ENCODE measurements at regions of chr17 and their contacts with region 1.

Region 1: GRCh38 chr17:42609182-42609813 is at the starts of genes RETREG3 and TUBG1:
- DNase-seq: peak; percentile 99
- H3K4me3 Mint-ChIP-seq: peak within 1 kb of the TSS; percentile 99
- H3K27ac Mint-ChIP-seq: peak within 1 kb of the TSS; percentile 91
- H3K4me1 Mint-ChIP-seq: peaks cover 13% of the 10 kb centered on the region
- H3K27me3 Mint-ChIP-seq: no peaks in the 10 kb centered on the region
- CTCF ChIP-seq: peak; percentile 34
- total RNA-seq, gene RETREG3: 45.2 and 46.0 TPM in 2 replicates
- total RNA-seq, gene TUBG1: 57.8 and 60.2 TPM in 2 replicates

Region 2: GRCh38 chr17:41602524-41602923 is 1006.8 kb before region 1 on chr17:
- CTCF ChIA-PET with region 1: no interaction called
- POLR2A ChIA-PET with region 1: no interaction called
- intact Hi-C with region 1: no loop called
- DNase-seq: no peak
- H3K4me3 Mint-ChIP-seq: no peak overlapping the region
- H3K27ac Mint-ChIP-seq: no peak overlapping the region
- H3K4me1 Mint-ChIP-seq: no peaks in the 10 kb centered on the region
- H3K27me3 Mint-ChIP-seq: no peaks in the 10 kb centered on the region
- CTCF ChIP-seq: no peak

Region 3: GRCh38 chr17:42586514-42587230 is 22.6 kb before region 1 on chr17:
- CTCF ChIA-PET with region 1: interaction called, 4 read pairs
- POLR2A ChIA-PET with region 1: interaction called, 83 read pairs
- intact Hi-C with region 1: no loop called
- DNase-seq: peak; percentile 52
- H3K4me3 Mint-ChIP-seq: peak overlapping the region; percentile 21
- H3K27ac Mint-ChIP-seq: peak overlapping the region; percentile 25
- H3K4me1 Mint-ChIP-seq: peaks cover 21% of the 10 kb centered on the region
- H3K27me3 Mint-ChIP-seq: no peaks in the 10 kb centered on the region
- CTCF ChIP-seq: no peak

Region 4: GRCh38 chr17:42598905-42599304 is 10.4 kb before region 1 on chr17:
- CTCF ChIA-PET with region 1: interaction called, 4 read pairs
- POLR2A ChIA-PET with region 1: interaction called, 28 read pairs
- intact Hi-C with region 1: no loop called
- DNase-seq: no peak
- H3K4me3 Mint-ChIP-seq: no peak overlapping the region
- H3K27ac Mint-ChIP-seq: no peak overlapping the region
- H3K4me1 Mint-ChIP-seq: no peaks in the 10 kb centered on the region
- H3K27me3 Mint-ChIP-seq: no peaks in the 10 kb centered on the region
- CTCF ChIP-seq: no peak

Region 5: DNA sequence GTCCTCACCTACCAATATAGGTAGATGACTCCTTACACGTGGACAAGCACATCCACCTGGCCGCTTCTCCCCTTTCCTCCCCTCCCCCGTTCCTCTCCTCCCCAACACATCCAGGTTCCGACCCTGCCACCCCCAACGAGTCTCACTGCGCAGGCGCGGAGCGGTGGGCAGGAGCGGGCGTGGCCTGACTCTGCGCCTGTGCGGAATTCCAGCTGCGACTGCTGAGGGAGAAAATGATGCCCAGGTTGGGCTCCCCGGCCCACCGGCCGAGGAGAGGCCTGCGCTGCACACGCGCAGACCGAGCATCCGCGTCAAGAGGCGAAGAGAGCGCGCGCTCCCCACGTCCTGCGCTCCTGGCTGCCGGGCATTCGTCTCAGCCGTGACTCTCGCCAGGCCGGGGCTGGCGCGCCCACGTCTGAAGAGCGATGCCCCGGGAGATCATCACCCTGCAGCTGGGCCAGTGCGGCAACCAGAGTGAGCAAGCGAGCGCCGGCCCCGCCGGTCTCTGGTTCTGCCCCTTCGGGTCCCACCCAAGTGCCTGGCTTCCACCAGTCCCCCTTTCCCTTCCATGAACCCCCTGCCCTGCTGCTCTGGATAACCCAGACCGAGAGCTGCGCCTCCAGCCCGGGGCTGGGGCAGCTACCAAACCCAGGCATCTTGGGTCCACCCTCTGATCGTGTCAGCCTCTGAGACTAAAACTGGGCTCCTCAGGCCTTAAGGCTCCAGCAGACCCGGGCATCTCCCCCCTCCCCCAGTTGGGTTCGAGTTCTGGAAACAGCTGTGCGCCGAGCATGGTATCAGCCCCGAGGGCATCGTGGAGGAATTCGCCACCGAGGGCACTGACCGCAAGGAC is 50.0 kb after region 1 on chr17 and contains the start of gene TUBG2:
- CTCF ChIA-PET with region 1: interaction called, 3 read pairs
- POLR2A ChIA-PET with region 1: interaction called, 25 read pairs
- intact Hi-C with region 1: no loop called
- DNase-seq: peak; percentile 88
- H3K4me3 Mint-ChIP-seq: peak within 1 kb of the TSS; percentile 88
- H3K27ac Mint-ChIP-seq: peak within 1 kb of the TSS; percentile 70
- H3K4me1 Mint-ChIP-seq: peaks cover 16% of the 10 kb centered on the region
- H3K27me3 Mint-ChIP-seq: no peaks in the 10 kb centered on the region
- CTCF ChIP-seq: no peak
- total RNA-seq, gene TUBG2: 21.3 and 23.4 TPM in 2 replicates

Region 6: GRCh38 chr17:42832974-42833766 is 223.9 kb after region 1 on chr17 and contains the start of gene PSME3:
- CTCF ChIA-PET with region 1: no interaction called
- POLR2A ChIA-PET with region 1: no interaction called
- intact Hi-C with region 1: no loop called
- DNase-seq: peak; percentile 87
- H3K4me3 Mint-ChIP-seq: peak within 1 kb of the TSS; percentile 96
- H3K27ac Mint-ChIP-seq: peak within 1 kb of the TSS; percentile 99
- H3K4me1 Mint-ChIP-seq: peaks cover 25% of the 10 kb centered on the region
- H3K27me3 Mint-ChIP-seq: no peaks in the 10 kb centered on the region
- CTCF ChIP-seq: no peak
- total RNA-seq, gene PSME3: 220 and 232 TPM in 2 replicates

Measured in MCF 10A (cell line).